ENCODE measurements at regions of chr10 and their contacts with region 1.

Region 1: GRCh38 chr10:5442065-5442989 is 30.0 kb downstream of the NET1 start:
- DNase-seq: no peak
- H3K4me3 ChIP-seq: no peak overlapping the region
- H3K27ac ChIP-seq: no peak overlapping the region
- H3K27me3 ChIP-seq: no peaks in the 10 kb centered on the region
- CTCF ChIP-seq: peak; percentile 66 to 95 (median 84)

Region 2: DNA sequence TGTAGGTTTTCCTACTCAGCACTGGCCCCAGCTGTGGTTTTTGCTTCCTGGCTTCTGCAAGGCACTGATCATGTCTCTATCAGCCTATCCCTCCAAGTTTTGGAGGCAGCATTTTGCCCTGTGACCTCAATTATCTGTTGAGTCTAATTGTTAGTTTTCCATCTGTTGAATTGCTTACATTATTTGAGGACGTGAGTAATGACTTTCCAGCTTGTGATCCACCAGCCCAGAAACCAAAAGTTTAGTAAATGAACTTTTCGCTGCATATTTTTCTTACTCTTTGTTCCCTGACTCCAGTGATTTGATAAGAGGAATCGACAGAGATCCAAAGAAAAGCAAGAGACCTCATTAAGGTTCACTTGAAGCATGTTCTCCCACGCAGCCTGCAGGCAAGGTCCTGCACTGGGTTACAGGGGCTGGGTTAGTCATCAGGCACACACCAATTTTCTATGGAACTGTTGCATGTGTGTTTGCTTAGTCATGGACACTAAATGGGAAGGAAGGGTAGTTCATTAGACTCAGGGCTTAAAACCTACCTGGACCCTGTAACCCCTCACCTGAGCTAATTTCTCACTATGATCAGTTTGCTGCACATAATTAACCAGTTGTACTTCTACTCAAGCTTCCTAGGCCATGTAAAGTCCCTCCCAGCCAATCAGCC is 559.1 kb before region 1 on chr10:
- intact Hi-C with region 1: no loop called
- DNase-seq: no peak
- H3K4me3 ChIP-seq: no peak overlapping the region
- H3K27ac ChIP-seq: no peak overlapping the region
- H3K27me3 ChIP-seq: no peaks in the 10 kb centered on the region
- CTCF ChIP-seq: no peak

Region 3: DNA sequence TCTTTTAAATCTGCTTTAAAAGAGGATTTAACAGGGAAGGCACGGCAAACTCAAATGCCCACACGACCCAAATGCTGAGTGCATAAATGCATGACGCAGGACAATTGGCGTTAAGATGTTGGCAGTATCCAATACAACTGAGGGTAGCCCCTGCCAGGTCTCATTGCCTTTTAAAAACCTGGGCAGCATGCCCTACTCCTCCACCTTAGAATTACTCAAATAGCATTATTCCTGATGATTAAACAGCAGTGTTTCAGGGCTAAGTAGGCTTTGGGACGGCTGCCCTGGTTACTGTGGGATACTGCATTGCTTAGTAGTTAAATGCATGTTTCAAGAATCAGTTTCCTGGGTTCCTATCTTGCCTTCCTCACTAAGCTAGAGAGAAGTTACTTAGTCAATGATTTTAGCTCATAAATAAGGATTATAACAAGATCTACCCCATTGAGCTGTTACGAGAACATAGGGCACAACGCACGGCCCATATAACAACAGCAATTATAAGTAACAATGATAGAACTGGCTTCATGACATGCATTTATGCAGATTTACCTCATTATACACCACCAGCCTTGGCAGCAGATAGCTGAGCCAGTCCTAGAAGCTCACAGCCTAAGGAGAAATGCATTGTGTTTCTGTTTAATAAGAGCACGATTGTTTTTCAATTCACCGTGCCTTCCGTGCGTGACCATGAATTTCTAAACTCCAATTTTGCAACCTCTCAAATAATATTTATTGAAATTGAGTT is 45.6 kb before region 1 on chr10:
- intact Hi-C with region 1: no loop called
- DNase-seq: peak in 6 of 10 donors; percentile 12 to 61 (median 45)
- H3K4me3 ChIP-seq: peak overlapping the region in 12 of 59 donors; percentile 1 to 20 (median 10)
- H3K27ac ChIP-seq: no peak overlapping the region
- H3K27me3 ChIP-seq: peaks cover 0 to 22% (median 0%) of the 10 kb centered on the region in 45 donors
- CTCF ChIP-seq: no peak

Region 4: GRCh38 chr10:5525561-5526341 is 83.4 kb after region 1 on chr10:
- intact Hi-C with region 1: no loop called
- DNase-seq: peak in 2 of 10 donors; percentile 42 to 48
- H3K4me3 ChIP-seq: peak overlapping the region in 33 of 59 donors; percentile 4 to 49 (median 30)
- H3K27ac ChIP-seq: peak overlapping the region in 3 of 59 donors; percentile 11 to 18 (median 18)
- H3K27me3 ChIP-seq: peaks cover 0 to 4% (median 0%) of the 10 kb centered on the region in 45 donors
- CTCF ChIP-seq: no peak

Region 5: GRCh38 chr10:5538450-5538849 is 96.1 kb after region 1 on chr10:
- intact Hi-C with region 1: no loop called
- DNase-seq: peak in 2 of 10 donors; percentile 8 to 13
- H3K4me3 ChIP-seq: no peak overlapping the region
- H3K27ac ChIP-seq: peak overlapping the region in 3 of 59 donors; percentile 18 to 52 (median 36)
- H3K27me3 ChIP-seq: no peaks in the 10 kb centered on the region
- CTCF ChIP-seq: no peak

Region 6: GRCh38 chr10:5623081-5623748 is 180.9 kb after region 1 on chr10:
- intact Hi-C with region 1: loop called (anchors 2 to 5 kb)
- DNase-seq: peak; percentile 64 to 84 (median 80)
- H3K4me3 ChIP-seq: peak overlapping the region in 6 of 59 donors; percentile 9 to 45 (median 12)
- H3K27ac ChIP-seq: peak overlapping the region in 4 of 59 donors; percentile 15 to 76 (median 70)
- H3K27me3 ChIP-seq: no peaks in the 10 kb centered on the region
- CTCF ChIP-seq: peak; percentile 44 to 94 (median 87)